ENCODE measurements at regions of chr13 and their contacts with region 1.

Region 1: DNA sequence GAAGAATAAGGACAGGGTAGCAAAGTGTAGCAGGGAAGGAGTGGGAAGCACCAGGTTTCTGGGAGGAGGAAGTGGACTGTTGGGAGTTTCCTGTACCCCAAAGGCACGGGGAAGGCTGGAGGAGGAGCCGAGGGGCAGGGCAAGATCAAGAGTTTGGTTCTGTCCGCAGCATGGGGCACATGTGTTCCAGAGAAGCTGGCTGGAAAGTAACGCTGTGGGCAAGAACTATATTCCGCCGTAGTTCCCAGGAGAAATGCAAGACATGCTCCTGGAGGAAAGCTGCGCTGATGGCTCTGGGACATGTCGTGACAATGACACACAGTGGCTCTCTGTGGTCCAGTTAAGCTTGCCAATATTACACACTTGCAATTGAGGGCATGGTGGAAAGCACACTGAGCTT is 51.7 kb upstream of the KPNA3 start:
- DNase-seq: no peak
- H3K4me3 ChIP-seq: no peak overlapping the region
- H3K27ac ChIP-seq: no peak overlapping the region
- H3K4me1 ChIP-seq: peaks cover 0 to 8% (median 2%) of the 10 kb centered on the region in 4 donors
- H3K27me3 ChIP-seq: no peaks in the 10 kb centered on the region
- CTCF ChIP-seq: no peak
- EP300 ChIP-seq: no peak
- POLR2A ChIP-seq: no peak

Region 2: GRCh38 chr13:49669735-49670309 is 174.4 kb before region 1 on chr13:
- intact Hi-C with region 1: loop called (anchors 2 kb)
- DNase-seq: peak; percentile 73
- H3K4me3 ChIP-seq: no peak overlapping the region
- H3K27ac ChIP-seq: no peak overlapping the region
- H3K4me1 ChIP-seq: peaks cover 0 to 6% (median 0%) of the 10 kb centered on the region in 4 donors
- H3K27me3 ChIP-seq: no peaks in the 10 kb centered on the region
- CTCF ChIP-seq: peak; percentile 38 to 64 (median 50)
- EP300 ChIP-seq: no peak
- POLR2A ChIP-seq: no peak